ENCODE measurements at regions of chr15 and their contacts with region 1.

Region 1: GRCh38 chr15:63504247-63504978 is at the start of gene USP3:
- DNase-seq: peak; percentile 93
- ATAC-seq: peak; percentile 68
- H3K4me3 Mint-ChIP-seq: peak within 1 kb of the TSS; percentile 93
- H3K27ac Mint-ChIP-seq: peak within 1 kb of the TSS; percentile 98
- H3K4me1 Mint-ChIP-seq: peaks cover 81% of the 10 kb centered on the region
- H3K27me3 Mint-ChIP-seq: no peaks in the 10 kb centered on the region
- CTCF ChIP-seq: no peak
- total RNA-seq, gene USP3: 92.7 and 110 TPM in 2 replicates

Region 2: DNA sequence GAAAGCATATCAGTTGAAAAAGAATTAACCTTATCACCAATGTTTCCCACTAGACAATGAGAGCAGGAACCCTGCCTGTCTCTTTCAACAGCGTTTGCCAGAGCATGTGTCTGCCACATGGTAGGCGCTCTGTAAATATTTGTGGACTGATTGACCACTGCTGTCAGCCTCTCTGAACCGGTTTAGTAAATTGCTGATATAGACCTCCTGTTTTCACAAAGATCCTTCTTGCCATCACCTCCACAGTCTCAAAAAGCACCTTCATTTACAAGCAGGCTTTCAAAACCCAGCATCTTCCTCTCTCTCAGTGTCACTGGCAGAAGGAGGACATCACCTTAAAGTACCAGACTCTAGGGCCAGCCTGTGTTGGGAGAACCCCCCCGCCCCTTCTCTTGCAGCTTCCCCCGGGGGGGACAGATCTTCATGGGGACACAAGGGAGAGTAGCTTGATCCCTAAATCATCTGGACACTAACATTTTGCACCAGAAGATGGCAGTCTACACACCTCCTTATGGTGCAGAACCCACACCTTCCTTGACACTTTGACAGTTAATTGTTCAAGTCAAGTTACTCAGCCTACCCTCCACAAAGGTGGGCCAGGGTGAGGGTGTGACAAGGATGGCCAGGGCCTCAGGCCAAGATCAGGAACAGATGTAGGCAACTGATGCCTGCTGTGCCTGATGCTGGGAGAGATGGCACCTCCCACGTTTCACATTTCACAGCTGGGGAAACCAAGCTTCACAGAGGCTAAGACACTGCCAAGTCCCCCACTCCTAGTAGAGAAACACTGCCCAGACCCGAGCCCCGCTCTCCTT is 37.8 kb before region 1 on chr15:
- CTCF ChIA-PET with region 1: interaction called, 94 read pairs
- POLR2A ChIA-PET with region 1: interaction called, 509 read pairs
- intact Hi-C with region 1: loop called (anchors 1 kb)
- DNase-seq: no peak
- ATAC-seq: peak; percentile 93
- H3K4me3 Mint-ChIP-seq: no peak overlapping the region
- H3K27ac Mint-ChIP-seq: no peak overlapping the region
- H3K4me1 Mint-ChIP-seq: peaks cover 29% of the 10 kb centered on the region
- H3K27me3 Mint-ChIP-seq: no peaks in the 10 kb centered on the region
- CTCF ChIP-seq: peak; percentile 56

Region 3: GRCh38 chr15:63487076-63487757 is 17.2 kb before region 1 on chr15:
- CTCF ChIA-PET with region 1: interaction called, 103 read pairs
- POLR2A ChIA-PET with region 1: interaction called, 509 read pairs
- intact Hi-C with region 1: loop called (anchors 1 kb)
- DNase-seq: peak; percentile 80
- ATAC-seq: peak; percentile 69
- H3K4me3 Mint-ChIP-seq: peak overlapping the region; percentile 75
- H3K27ac Mint-ChIP-seq: peak overlapping the region; percentile 83
- H3K4me1 Mint-ChIP-seq: peaks cover 83% of the 10 kb centered on the region
- H3K27me3 Mint-ChIP-seq: no peaks in the 10 kb centered on the region
- CTCF ChIP-seq: no peak

Region 4: GRCh38 chr15:63531586-63531985 is 27.2 kb after region 1 on chr15:
- CTCF ChIA-PET with region 1: interaction called, 7 read pairs
- POLR2A ChIA-PET with region 1: interaction called, 16 read pairs
- intact Hi-C with region 1: loop called (anchors 2 kb)
- DNase-seq: no peak
- ATAC-seq: peak; percentile 51
- H3K4me3 Mint-ChIP-seq: peak overlapping the region; percentile 12
- H3K27ac Mint-ChIP-seq: peak overlapping the region; percentile 39
- H3K4me1 Mint-ChIP-seq: peaks cover 97% of the 10 kb centered on the region
- H3K27me3 Mint-ChIP-seq: no peaks in the 10 kb centered on the region
- CTCF ChIP-seq: no peak

Region 5: GRCh38 chr15:63600616-63601025 is 96.2 kb after region 1 on chr15:
- CTCF ChIA-PET with region 1: interaction called, 3 read pairs
- POLR2A ChIA-PET with region 1: interaction called, 96 read pairs
- intact Hi-C with region 1: loop called (anchors 1 kb)
- DNase-seq: peak; percentile 90
- ATAC-seq: peak; percentile 71
- H3K4me3 Mint-ChIP-seq: peak overlapping the region; percentile 91
- H3K27ac Mint-ChIP-seq: peak overlapping the region; percentile 91
- H3K4me1 Mint-ChIP-seq: peaks cover 75% of the 10 kb centered on the region
- H3K27me3 Mint-ChIP-seq: no peaks in the 10 kb centered on the region
- CTCF ChIP-seq: no peak